T-cell (primary cell): ENCODE measurements at regions of chr5 and their contacts with region 1.

Region 1: GRCh38 chr5:160033546-160034252 is 24.8 kb downstream of the TTC1 start:
- DNase-seq: no peak
- ATAC-seq: no peak
- H3K4me3 ChIP-seq: no peak overlapping the region
- H3K4me3 Mint-ChIP-seq: no peak overlapping the region
- H3K27ac ChIP-seq: no peak overlapping the region
- H3K27ac Mint-ChIP-seq: peak overlapping the region in 1 of 2 donors; percentile 34
- H3K4me1 ChIP-seq: no peaks in the 10 kb centered on the region
- H3K4me1 Mint-ChIP-seq: peaks cover 15 to 20% (median 15%) of the 10 kb centered on the region in 3 donors
- H3K27me3 ChIP-seq: no peaks in the 10 kb centered on the region
- H3K27me3 Mint-ChIP-seq: no peaks in the 10 kb centered on the region

Region 2: DNA sequence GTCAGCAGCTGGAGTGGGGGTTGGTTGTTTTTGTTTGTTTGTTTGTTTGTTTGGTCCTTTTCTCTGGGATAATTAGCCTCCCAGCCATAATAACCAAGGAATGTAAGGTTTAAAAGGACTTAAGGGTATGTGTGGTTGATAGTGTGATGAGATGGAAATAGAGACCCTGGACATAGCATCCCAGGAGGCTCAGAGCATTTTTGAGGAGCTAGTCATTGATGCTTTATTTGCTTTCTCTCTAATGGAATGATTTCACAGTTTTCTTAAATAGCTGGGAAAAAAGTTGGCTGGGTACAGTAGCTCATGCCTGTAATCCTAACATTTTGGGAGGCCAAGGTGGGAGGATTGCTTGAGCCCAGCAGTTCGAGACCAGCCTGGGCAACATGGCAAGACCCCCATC is 20.3 kb after region 1 on chr5:
- CTCF ChIA-PET with region 1: interaction called in 1 of 2 experiments, 13 read pairs
- POLR2A ChIA-PET with region 1: no interaction called
- DNase-seq: no peak
- ATAC-seq: no peak
- H3K4me3 ChIP-seq: no peak overlapping the region
- H3K4me3 Mint-ChIP-seq: no peak overlapping the region
- H3K27ac ChIP-seq: no peak overlapping the region
- H3K27ac Mint-ChIP-seq: no peak overlapping the region
- H3K4me1 ChIP-seq: no peaks in the 10 kb centered on the region
- H3K4me1 Mint-ChIP-seq: no peaks in the 10 kb centered on the region
- H3K27me3 ChIP-seq: no peaks in the 10 kb centered on the region
- H3K27me3 Mint-ChIP-seq: no peaks in the 10 kb centered on the region

Region 3: GRCh38 chr5:160064995-160065630 is 31.4 kb after region 1 on chr5:
- CTCF ChIA-PET with region 1: no interaction called
- POLR2A ChIA-PET with region 1: no interaction called
- DNase-seq: no peak
- ATAC-seq: no peak
- H3K4me3 ChIP-seq: no peak overlapping the region
- H3K4me3 Mint-ChIP-seq: no peak overlapping the region
- H3K27ac ChIP-seq: no peak overlapping the region
- H3K27ac Mint-ChIP-seq: peak overlapping the region in 1 of 2 donors; percentile 24
- H3K4me1 ChIP-seq: no peaks in the 10 kb centered on the region
- H3K4me1 Mint-ChIP-seq: no peaks in the 10 kb centered on the region
- H3K27me3 ChIP-seq: no peaks in the 10 kb centered on the region
- H3K27me3 Mint-ChIP-seq: no peaks in the 10 kb centered on the region

Region 4: DNA sequence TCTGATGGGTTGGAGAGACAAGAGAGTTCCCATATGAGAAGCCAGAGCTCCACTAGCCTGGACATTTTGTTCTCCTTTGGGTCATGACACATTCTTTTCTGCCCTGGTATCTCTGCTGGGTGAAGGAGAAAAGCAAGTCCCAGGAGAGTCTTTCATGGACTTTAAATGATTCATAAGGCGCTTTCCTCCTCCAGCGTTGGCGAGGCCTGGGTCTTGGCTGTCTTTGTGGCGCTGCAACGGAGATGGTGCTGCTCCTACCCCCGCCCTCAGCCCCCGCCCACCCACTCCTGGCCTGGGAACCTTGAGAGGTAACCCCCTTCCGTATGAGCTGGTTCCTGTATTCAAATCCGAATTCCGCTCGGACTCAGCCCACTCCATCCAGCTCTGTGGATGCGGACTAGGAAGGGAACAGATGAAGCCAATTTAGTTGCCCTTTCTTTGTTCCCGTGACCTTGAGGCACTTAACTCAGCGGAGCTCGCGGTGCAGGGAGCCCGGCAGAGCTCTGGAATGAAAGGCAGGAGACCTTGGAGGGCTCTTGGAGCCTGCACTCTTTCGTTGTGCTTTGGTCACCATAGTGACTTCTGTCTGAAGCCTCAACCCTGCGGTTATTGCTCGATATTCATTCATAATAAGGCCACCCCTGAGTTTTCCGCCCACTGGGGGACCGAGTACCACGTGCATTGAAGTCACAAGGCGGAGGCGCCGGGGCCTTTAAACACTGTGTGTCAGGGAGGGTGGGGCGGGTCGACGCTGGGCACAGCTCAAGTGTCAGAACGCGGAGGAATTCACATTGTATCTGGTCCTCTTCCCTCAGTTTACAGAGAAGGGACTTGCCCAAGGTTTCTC is 99.6 kb after region 1 on chr5:
- CTCF ChIA-PET with region 1: no interaction called
- POLR2A ChIA-PET with region 1: no interaction called
- DNase-seq: no peak
- ATAC-seq: no peak
- H3K4me3 ChIP-seq: no peak overlapping the region
- H3K4me3 Mint-ChIP-seq: no peak overlapping the region
- H3K27ac ChIP-seq: no peak overlapping the region
- H3K27ac Mint-ChIP-seq: no peak overlapping the region
- H3K4me1 ChIP-seq: no peaks in the 10 kb centered on the region
- H3K4me1 Mint-ChIP-seq: no peaks in the 10 kb centered on the region
- H3K27me3 ChIP-seq: peaks cover 0 to 7% of the 10 kb centered on the region in 2 experiments
- H3K27me3 Mint-ChIP-seq: no peaks in the 10 kb centered on the region